Activated CD8-positive, alpha-beta T cell treated with anti-CD3 and anti-CD28 coated beads, Interleukin-2, amount 10 ng/mL, durations not matched to agents 7 days and 5 days (primary cell): ENCODE measurements at regions of chr6 and their contacts with region 1.

Region 1: DNA sequence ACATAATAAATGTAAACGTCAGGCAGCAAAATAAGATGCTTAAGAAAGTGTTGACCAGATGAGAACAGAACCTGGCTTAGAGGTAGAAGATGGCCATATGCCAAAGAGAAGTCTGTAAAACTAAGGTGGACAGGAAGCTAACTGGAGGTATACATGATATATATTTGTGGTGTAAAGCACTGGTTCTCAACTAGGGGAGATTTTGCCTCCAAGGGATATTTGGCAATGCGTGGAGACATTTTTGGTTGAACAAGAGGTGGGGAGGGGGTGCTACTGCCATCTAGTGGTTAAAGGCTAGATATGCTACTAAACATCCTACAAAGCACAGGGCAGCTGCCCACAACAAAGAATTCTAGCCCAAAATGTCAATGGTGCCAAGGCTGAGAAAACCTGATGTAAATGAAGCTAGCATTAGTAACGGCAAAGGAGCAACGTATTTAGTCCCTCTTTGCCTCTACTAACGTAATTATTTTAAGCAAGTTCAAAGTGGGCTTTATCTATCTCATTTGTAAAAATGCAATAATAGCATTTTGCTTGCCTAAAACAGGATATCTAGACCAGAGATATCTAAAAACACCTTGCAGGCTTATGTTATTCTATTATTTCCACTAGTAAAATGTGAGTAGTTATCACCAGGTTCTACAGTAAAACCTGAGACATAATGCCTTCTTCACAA is 182.6 kb downstream of the RNGTT start:
- DNase-seq: peak; percentile 63
- ATAC-seq: peak; percentile 69
- H3K4me3 Mint-ChIP-seq: no peak overlapping the region
- H3K27ac Mint-ChIP-seq: no peak overlapping the region
- H3K4me1 Mint-ChIP-seq: no peaks in the 10 kb centered on the region
- H3K27me3 Mint-ChIP-seq: no peaks in the 10 kb centered on the region

Region 2: GRCh38 chr6:88763160-88763559 is 17.7 kb before region 1 on chr6:
- CTCF ChIA-PET with region 1: no interaction called
- POLR2A ChIA-PET with region 1: no interaction called
- DNase-seq: no peak
- ATAC-seq: no peak
- H3K4me3 Mint-ChIP-seq: no peak overlapping the region
- H3K27ac Mint-ChIP-seq: no peak overlapping the region
- H3K4me1 Mint-ChIP-seq: no peaks in the 10 kb centered on the region
- H3K27me3 Mint-ChIP-seq: no peaks in the 10 kb centered on the region

Region 3: DNA sequence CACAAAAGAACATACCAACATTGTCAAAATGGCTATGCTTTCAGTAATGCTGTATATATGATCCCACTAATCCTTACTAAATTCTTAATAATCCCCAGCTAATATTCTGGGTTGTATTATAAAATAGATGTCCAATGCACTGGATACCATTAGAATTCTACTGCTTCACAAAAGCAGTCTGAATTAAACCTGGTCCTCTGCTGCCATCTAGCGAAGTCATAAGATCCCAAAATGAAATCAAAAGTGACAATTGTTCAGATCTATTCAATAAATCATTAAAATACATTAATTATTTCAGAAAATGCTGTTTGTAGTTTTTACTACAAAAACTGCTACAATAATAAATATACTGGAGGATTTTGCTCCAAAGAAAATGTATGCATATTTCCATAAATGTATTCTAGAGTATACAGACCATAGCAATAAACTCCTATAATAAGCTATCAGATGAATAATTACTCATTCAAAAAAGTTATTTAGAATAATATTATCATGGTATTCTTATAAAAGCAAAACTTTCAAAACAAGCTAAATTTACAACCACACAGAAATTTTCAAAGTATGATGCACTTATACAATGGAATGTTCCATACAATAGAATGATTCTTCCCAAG is 90.0 kb after region 1 on chr6:
- CTCF ChIA-PET with region 1: interaction called, 11 read pairs
- POLR2A ChIA-PET with region 1: no interaction called
- DNase-seq: peak; percentile 59
- ATAC-seq: no peak
- H3K4me3 Mint-ChIP-seq: no peak overlapping the region
- H3K27ac Mint-ChIP-seq: no peak overlapping the region
- H3K4me1 Mint-ChIP-seq: peaks cover 9% of the 10 kb centered on the region
- H3K27me3 Mint-ChIP-seq: no peaks in the 10 kb centered on the region